Calu3 (cell line): ENCODE measurements at regions of chr19 and their contacts with region 1.

Region 1: DNA sequence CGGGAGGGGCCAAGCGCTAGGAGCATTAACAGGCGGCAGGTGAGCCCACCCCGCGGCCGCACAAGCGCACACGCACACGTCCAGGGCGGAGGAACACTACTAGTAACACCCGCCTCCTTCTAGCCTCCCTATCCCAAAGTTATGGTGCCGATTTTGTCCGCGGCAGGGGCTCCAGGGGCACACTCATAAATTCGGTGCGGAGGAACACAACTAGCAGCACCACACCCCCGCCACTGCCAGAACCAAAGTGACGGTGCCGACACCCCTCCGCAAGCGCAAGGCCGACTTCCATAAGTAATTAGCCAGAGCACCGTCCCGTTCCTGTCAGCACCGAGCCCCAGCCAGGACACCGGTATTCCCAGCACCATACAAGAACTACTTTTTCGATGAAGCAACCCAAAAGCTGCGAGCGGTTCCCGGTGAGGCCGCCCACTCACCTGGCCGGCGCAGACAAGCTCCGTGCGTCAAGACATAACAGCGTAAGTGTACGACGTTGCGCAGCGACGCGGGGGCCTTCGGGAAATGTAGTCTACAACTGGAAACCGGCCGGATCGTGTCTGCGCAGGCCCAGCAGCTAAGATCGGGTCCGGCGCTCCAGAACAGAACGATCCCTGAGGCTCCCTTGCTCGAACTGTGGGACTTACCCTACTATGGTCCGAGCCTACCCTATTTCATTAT is at the starts of genes ZNF540 and ZNF571:
- DNase-seq: peak; percentile 95
- H3K4me3 Mint-ChIP-seq: peak within 1 kb of the TSS; percentile 97
- H3K27ac Mint-ChIP-seq: peak within 1 kb of the TSS; percentile 99
- H3K4me1 Mint-ChIP-seq: peaks cover 21% of the 10 kb centered on the region
- H3K27me3 Mint-ChIP-seq: no peaks in the 10 kb centered on the region
- CTCF ChIP-seq: no peak
- total RNA-seq, gene ZNF540: 0.42 and 1.7 TPM in 2 replicates
- total RNA-seq, gene ZNF571: 4.3 and 7.3 TPM in 2 replicates

Region 2: DNA sequence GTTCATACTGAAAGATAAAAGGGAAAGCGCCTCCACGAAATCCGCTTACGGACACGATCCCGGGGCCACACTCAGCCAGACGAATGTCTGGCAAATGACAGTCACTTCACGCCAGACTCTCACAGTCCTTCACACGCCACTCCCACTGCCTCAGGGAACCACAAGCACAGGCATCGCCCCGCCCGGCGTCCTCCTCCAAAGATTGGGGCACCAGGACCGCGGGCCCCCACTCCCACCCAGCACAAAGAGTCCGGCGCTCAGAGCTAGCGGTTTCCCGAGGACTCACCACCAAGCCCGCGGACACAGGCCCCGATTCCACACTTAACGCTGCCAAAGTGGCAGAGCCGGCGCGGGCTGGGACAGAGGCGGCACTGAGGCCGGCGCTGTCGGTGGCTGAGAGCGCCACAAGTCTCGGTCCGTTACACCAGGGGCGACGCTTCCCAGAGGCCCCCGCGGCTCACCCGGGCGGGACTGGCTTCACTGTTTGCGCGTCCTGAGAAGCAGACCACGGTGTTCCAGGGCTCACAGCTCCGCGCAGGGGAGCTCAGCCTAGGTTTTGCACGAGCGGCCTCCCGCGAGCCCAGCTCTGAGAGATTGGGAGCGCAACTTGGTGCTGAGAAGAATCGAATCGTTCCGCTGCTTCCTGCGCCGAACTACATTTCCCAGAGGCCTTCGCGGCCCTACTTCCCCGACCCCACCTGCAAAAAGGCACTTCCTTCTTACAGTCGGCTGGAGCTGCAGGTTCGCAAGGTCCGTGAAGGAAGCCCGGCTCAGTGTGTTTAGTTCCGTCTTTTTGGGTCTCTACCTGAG is 127.4 kb before region 1 on chr19 and contains the start of gene ZNF569:
- CTCF ChIA-PET with region 1: interaction called, 5 read pairs
- intact Hi-C with region 1: loop called (anchors 2 kb)
- DNase-seq: peak; percentile 85
- H3K4me3 Mint-ChIP-seq: peak within 1 kb of the TSS; percentile 95
- H3K27ac Mint-ChIP-seq: peak within 1 kb of the TSS; percentile 89
- H3K4me1 Mint-ChIP-seq: no peaks in the 10 kb centered on the region
- H3K27me3 Mint-ChIP-seq: no peaks in the 10 kb centered on the region
- CTCF ChIP-seq: no peak
- total RNA-seq, gene ZNF569: 2.8 and 3.8 TPM in 2 replicates

Region 3: GRCh38 chr19:37654629-37655300 is 60.3 kb after region 1 on chr19:
- CTCF ChIA-PET with region 1: no interaction called
- intact Hi-C with region 1: loop called (anchors 1 kb)
- DNase-seq: peak; percentile 49
- H3K4me3 Mint-ChIP-seq: peak overlapping the region; percentile 98
- H3K27ac Mint-ChIP-seq: peak overlapping the region; percentile 88
- H3K4me1 Mint-ChIP-seq: peaks cover 9% of the 10 kb centered on the region
- H3K27me3 Mint-ChIP-seq: no peaks in the 10 kb centered on the region
- CTCF ChIP-seq: no peak

Region 4: GRCh38 chr19:37779127-37780005 is 184.9 kb after region 1 on chr19 and contains the start of gene ZNF573:
- CTCF ChIA-PET with region 1: interaction called, 5 read pairs
- intact Hi-C with region 1: loop called (anchors 10 kb)
- DNase-seq: peak; percentile 86
- H3K4me3 Mint-ChIP-seq: peak within 1 kb of the TSS; percentile 96
- H3K27ac Mint-ChIP-seq: peak within 1 kb of the TSS; percentile 83
- H3K4me1 Mint-ChIP-seq: peaks cover 8% of the 10 kb centered on the region
- H3K27me3 Mint-ChIP-seq: no peaks in the 10 kb centered on the region
- CTCF ChIP-seq: no peak
- total RNA-seq, gene ZNF573: 10.1 and 16.8 TPM in 2 replicates